B cell (primary cell): ENCODE measurements at regions of chr19 and their contacts with region 1.

Region 1: DNA sequence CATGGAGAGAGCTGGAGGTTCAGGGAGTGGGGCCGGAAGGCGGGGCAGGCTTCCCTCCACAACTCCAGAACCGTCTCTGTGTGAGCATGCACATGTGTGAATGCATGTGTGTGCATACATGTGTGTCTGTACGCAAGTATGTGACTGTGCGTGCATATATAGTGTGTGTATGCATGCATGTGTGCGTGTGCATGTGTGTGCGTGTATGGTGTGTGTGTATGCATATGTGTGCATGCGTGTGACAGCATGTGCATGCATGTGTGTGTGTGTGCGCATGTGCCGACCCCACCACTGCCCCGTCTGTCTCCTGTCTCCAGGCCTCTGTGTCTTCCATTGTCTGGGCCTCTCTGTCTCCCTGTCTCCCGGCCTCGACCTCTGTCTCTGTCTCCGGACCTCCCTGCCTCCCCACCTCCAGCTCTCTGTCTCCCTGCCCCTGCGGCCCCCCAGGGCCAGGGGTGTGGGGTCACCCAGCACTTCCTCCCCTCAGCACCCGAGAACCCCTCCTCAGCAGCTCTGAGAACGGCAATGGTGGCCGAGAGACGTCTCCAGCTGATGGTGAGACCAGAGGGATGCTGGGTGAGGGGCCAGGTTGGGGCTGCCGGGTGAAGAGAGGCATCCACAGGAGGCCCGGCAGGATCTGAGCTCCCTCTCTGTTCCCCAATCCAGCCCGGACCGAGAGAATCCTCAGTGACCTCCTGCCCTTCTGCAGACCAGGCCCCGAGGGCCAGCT is 22.5 kb downstream of the ARHGEF1 start:
- DNase-seq: no peak
- ATAC-seq: no peak
- H3K4me3 ChIP-seq: no peak overlapping the region
- H3K4me3 Mint-ChIP-seq: no peak overlapping the region
- H3K27ac ChIP-seq: no peak overlapping the region
- H3K27ac Mint-ChIP-seq: peak overlapping the region; percentile 46
- H3K4me1 ChIP-seq: no peaks in the 10 kb centered on the region
- H3K4me1 Mint-ChIP-seq: peaks cover 4% of the 10 kb centered on the region
- H3K27me3 ChIP-seq: no peaks in the 10 kb centered on the region
- H3K27me3 Mint-ChIP-seq: no peaks in the 10 kb centered on the region
- CTCF ChIP-seq: no peak

Region 2: DNA sequence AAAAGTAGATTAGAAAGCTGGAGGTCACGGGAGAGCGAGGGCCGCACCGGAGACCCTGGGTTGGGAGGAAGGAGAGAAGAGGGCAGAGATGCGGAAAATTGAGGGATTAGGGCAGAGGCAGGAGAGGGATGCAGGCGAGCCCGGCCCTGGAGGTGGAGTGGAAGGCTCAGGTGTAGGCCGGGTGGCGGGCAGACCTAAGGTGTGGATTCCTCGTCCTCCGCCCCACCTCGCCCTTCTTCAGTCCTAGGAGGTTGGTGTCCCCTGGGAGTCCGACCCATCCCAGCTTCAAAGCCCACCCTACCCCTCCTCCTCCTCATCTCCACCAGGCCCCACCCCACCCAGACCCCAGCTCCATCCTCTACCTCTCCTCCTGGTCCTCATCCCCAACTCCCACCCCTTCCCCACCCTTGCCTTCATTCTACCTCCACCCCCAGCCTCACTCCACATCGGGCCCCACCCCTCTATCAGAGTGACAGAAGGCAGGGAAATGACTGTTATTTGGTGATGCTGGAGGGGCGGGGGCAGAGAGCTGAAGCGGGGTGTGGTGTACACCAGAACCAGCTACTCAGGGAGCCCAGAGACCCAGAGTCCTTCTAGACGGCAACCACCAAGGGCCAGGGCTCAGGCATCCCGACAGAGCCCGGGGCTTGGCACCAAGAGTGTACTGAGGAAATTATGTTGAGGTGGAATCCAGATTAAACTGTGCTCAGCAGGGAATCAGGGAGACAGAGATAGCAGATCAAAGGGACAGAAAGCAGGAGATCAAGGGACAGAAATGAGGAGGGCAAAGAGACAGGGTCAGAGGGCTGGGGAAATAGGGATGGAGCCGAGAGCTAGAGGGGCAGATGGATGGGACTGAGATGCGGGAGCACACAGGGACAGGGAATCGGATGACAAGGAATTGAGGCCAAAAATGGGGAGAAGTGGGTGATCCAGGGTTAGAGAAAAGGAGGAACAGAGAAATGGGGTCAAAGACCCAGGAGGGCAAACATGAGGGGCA is 16.4 kb after region 1 on chr19:
- CTCF ChIA-PET with region 1: no interaction called
- POLR2A ChIA-PET with region 1: interaction called, 11 read pairs
- intact Hi-C with region 1: no loop called
- DNase-seq: peak; percentile 27
- ATAC-seq: peak; percentile 24
- H3K4me3 ChIP-seq: no peak overlapping the region
- H3K4me3 Mint-ChIP-seq: peak overlapping the region; percentile 62
- H3K27ac ChIP-seq: no peak overlapping the region
- H3K27ac Mint-ChIP-seq: no peak overlapping the region
- H3K4me1 ChIP-seq: peaks cover 41 to 44% of the 10 kb centered on the region in 2 donors
- H3K4me1 Mint-ChIP-seq: peaks cover 21% of the 10 kb centered on the region
- H3K27me3 ChIP-seq: peaks cover 0 to 43% (median 28%) of the 10 kb centered on the region in 4 experiments
- H3K27me3 Mint-ChIP-seq: peaks cover 16% of the 10 kb centered on the region
- CTCF ChIP-seq: no peak